Activated naive CD4-positive, alpha-beta T cell treated with anti-CD3 and anti-CD28 coated beads for 36 hours (primary cell): ENCODE measurements at regions of chr2 and their contacts with region 1.

Region 1: GRCh38 chr2:152740743-152741328 is 22.4 kb downstream of the ARL6IP6 start:
- DNase-seq: no peak
- H3K4me3 Mint-ChIP-seq: no peak overlapping the region
- H3K27ac Mint-ChIP-seq: no peak overlapping the region
- H3K4me1 Mint-ChIP-seq: no peaks in the 10 kb centered on the region
- H3K27me3 Mint-ChIP-seq: no peaks in the 10 kb centered on the region

Region 2: DNA sequence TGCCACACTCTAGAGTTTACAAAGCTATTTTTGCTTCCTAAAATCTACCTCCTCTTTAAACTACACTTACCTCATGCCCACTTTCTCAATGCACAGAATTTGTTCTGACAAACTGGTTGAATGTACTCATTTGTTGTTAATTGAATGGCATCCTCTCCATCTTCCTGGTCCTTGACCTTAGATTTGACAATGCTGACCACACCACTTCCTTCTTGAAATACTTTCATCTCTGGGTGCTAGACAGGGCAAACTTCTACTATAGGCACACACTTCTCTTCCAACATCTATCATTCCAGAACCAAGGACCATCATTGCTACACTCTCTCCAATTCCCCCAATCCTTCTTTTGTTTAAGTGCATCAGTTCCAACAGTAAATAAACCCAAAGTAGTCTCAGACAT is 934.9 kb before region 1 on chr2:
- CTCF ChIA-PET with region 1: no interaction called
- intact Hi-C with region 1: no loop called
- DNase-seq: no peak
- H3K4me3 Mint-ChIP-seq: no peak overlapping the region
- H3K27ac Mint-ChIP-seq: no peak overlapping the region
- H3K4me1 Mint-ChIP-seq: peaks cover 2% of the 10 kb centered on the region
- H3K27me3 Mint-ChIP-seq: no peaks in the 10 kb centered on the region

Region 3: GRCh38 chr2:152189622-152190495 is 551.0 kb before region 1 on chr2:
- CTCF ChIA-PET with region 1: no interaction called
- intact Hi-C with region 1: loop called (anchors 5 kb)
- DNase-seq: peak; percentile 49
- H3K4me3 Mint-ChIP-seq: no peak overlapping the region
- H3K27ac Mint-ChIP-seq: no peak overlapping the region
- H3K4me1 Mint-ChIP-seq: peaks cover 5% of the 10 kb centered on the region
- H3K27me3 Mint-ChIP-seq: peaks cover 17% of the 10 kb centered on the region

Region 4: GRCh38 chr2:152925547-152926327 is 184.9 kb after region 1 on chr2:
- CTCF ChIA-PET with region 1: no interaction called
- intact Hi-C with region 1: loop called (anchors 5 kb)
- DNase-seq: peak; percentile 67
- H3K4me3 Mint-ChIP-seq: no peak overlapping the region
- H3K27ac Mint-ChIP-seq: no peak overlapping the region
- H3K4me1 Mint-ChIP-seq: no peaks in the 10 kb centered on the region
- H3K27me3 Mint-ChIP-seq: peaks cover 9% of the 10 kb centered on the region

Region 5: DNA sequence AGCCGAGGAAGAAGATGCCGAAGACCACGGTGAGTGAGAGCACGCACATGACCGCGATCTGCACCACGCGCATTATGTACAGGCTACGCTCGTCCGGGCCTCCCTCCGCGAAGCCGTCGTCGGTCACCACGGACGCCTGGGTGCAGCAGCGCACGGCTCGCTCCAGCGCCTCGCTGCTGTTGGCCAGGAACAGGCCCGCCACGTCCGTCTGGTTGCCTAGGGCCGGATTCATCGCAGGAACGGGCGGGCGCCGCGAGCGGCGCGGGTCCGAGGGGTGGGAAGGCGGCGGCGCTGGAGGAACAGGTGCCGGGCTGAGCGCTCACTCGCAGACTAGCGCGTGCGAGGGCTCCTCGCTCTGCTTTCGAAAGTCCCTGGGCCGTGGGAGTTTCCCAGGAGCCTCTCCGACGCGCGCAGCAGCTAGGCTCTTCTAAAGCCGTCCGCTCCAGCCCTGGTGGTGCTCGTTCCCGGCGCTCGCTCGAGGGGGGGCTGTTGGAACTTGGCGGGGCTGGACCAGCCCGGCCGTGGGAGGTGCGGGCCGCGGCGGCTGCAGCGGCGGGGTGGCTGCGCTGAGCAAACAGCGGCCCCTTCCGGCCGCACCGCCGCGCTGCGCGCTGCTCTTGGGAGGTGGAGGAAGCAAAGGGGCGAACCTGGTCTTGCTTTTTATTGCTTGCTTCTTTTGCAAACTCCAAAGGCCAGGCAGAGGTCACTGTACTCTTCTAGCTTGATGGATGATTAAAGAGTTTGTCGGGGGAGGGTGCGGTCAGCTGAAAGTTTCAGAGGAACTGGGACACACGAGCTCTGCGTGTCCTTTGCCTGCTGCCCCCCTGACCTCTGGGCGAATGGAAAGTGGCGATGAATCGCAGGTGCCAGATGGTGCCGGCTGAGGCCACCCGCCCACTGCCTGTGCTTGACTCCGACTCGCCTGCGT is 737.8 kb after region 1 on chr2 and contains the start of gene RPRM:
- CTCF ChIA-PET with region 1: no interaction called
- intact Hi-C with region 1: loop called (anchors 1 kb)
- DNase-seq: peak; percentile 55
- H3K4me3 Mint-ChIP-seq: peak within 1 kb of the TSS; percentile 52
- H3K27ac Mint-ChIP-seq: no peak within 1 kb of the TSS
- H3K4me1 Mint-ChIP-seq: peaks cover 15% of the 10 kb centered on the region
- H3K27me3 Mint-ChIP-seq: peaks cover 56% of the 10 kb centered on the region
- total RNA-seq, gene RPRM: not detected